Activated CD8-positive, alpha-beta T cell treated with anti-CD3 and anti-CD28 coated beads for 36 hours (primary cell): ENCODE measurements at regions of chr2 and their contacts with region 1.

Region 1: DNA sequence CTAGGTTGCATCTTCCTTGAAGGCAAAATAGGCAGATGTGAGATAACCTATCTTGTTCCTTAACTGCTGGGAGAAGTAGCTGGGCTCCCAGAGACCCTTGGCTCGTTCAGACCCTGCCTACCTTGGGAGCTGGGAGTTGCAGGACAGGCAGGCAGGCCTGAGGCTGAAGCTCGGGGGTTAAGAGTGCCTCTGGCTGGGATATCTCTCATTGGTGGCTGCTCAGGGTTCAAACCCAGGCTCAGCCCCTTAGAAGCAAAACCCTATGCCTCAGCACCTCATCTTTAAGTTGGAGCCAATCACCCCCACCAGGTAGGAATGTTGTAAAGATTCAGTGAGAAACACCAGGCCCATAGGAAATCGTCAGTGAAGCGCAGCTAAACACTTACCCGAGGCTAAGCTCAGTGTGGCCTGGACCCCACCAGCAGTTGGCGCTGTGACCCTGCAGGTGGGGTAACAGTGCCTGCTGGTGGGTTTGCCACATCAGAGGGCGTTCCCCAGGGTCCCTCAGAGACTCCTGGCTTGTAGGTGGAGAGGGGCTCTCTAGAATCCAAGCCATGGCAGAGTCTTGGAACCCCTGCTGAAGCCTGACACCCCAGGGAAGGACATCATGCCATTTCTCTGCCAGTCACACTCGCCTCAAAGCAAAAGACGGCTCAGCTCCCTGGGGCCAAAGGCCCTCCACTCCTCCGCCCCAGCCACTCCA is 54.6 kb upstream of the GPR17 start:
- DNase-seq: peak; percentile 83
- ATAC-seq: peak; percentile 99
- H3K4me3 Mint-ChIP-seq: no peak overlapping the region
- H3K27ac Mint-ChIP-seq: no peak overlapping the region
- H3K4me1 Mint-ChIP-seq: peaks cover 3% of the 10 kb centered on the region
- H3K27me3 Mint-ChIP-seq: no peaks in the 10 kb centered on the region
- CTCF ChIP-seq: peak; percentile 78

Region 2: DNA sequence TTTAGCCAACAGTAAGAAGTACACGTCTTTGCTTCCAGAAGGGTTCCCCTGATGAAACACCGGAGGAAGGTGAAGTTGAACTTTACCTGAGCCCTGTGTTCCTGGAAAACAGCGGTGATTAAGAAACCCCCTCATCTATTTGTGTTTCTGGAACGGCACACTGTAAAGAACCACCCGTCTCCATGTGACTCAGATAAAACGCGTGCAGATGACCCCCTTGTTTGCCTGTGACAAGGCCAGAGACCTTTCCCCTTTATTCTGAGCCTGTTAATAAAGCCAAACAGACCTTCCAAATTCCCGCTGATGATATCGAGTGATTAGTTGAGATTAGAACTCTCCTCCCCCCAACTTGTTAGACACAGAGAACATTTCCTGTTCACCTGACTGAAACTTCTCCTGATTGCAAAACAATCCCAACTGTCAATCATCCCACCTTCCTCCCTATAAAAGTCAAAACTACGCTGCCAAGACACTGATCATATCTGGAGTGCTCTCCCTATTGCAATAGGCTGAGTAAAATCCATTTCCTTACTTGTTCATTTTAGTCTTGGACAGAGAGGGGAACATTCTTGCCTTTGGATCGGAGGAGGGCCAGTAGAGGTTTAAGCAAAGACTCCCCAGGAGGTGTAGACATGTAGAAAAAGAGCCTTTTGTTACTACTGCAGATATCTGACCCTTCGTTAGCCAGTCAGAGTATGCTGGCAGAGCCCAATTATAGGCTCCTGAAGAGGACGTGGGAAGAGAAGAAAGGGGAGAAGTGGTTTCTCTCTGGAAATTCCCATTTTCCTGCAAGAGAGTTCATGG is 64.2 kb before region 1 on chr2:
- CTCF ChIA-PET with region 1: interaction called, 10 read pairs
- POLR2A ChIA-PET with region 1: no interaction called
- intact Hi-C with region 1: no loop called
- DNase-seq: no peak
- ATAC-seq: peak; percentile 18
- H3K4me3 Mint-ChIP-seq: peak overlapping the region; percentile 96
- H3K27ac Mint-ChIP-seq: peak overlapping the region; percentile 96
- H3K4me1 Mint-ChIP-seq: peaks cover 22% of the 10 kb centered on the region
- H3K27me3 Mint-ChIP-seq: no peaks in the 10 kb centered on the region
- CTCF ChIP-seq: no peak

Region 3: GRCh38 chr2:127609031-127609751 is 17.8 kb after region 1 on chr2:
- CTCF ChIA-PET with region 1: interaction called, 35 read pairs
- POLR2A ChIA-PET with region 1: no interaction called
- intact Hi-C with region 1: no loop called
- DNase-seq: no peak
- ATAC-seq: peak; percentile 17
- H3K4me3 Mint-ChIP-seq: no peak overlapping the region
- H3K27ac Mint-ChIP-seq: no peak overlapping the region
- H3K4me1 Mint-ChIP-seq: peaks cover 3% of the 10 kb centered on the region
- H3K27me3 Mint-ChIP-seq: no peaks in the 10 kb centered on the region
- CTCF ChIP-seq: no peak

Region 4: GRCh38 chr2:127637725-127638252 is 46.4 kb after region 1 on chr2:
- CTCF ChIA-PET with region 1: interaction called, 39 read pairs
- POLR2A ChIA-PET with region 1: interaction called, 5 read pairs
- intact Hi-C with region 1: no loop called
- DNase-seq: no peak
- ATAC-seq: no peak
- H3K4me3 Mint-ChIP-seq: peak overlapping the region; percentile 15
- H3K27ac Mint-ChIP-seq: peak overlapping the region; percentile 75
- H3K4me1 Mint-ChIP-seq: peaks cover 63% of the 10 kb centered on the region
- H3K27me3 Mint-ChIP-seq: no peaks in the 10 kb centered on the region
- CTCF ChIP-seq: no peak

Region 5: GRCh38 chr2:127649684-127650040 is 58.3 kb after region 1 on chr2:
- CTCF ChIA-PET with region 1: interaction called, 114 read pairs
- POLR2A ChIA-PET with region 1: interaction called, 4 read pairs
- intact Hi-C with region 1: loop called (anchors 1 kb)
- DNase-seq: peak; percentile 91
- ATAC-seq: peak; percentile 87
- H3K4me3 Mint-ChIP-seq: no peak overlapping the region
- H3K27ac Mint-ChIP-seq: peak overlapping the region; percentile 66
- H3K4me1 Mint-ChIP-seq: peaks cover 14% of the 10 kb centered on the region
- H3K27me3 Mint-ChIP-seq: no peaks in the 10 kb centered on the region
- CTCF ChIP-seq: peak; percentile 85

Region 6: DNA sequence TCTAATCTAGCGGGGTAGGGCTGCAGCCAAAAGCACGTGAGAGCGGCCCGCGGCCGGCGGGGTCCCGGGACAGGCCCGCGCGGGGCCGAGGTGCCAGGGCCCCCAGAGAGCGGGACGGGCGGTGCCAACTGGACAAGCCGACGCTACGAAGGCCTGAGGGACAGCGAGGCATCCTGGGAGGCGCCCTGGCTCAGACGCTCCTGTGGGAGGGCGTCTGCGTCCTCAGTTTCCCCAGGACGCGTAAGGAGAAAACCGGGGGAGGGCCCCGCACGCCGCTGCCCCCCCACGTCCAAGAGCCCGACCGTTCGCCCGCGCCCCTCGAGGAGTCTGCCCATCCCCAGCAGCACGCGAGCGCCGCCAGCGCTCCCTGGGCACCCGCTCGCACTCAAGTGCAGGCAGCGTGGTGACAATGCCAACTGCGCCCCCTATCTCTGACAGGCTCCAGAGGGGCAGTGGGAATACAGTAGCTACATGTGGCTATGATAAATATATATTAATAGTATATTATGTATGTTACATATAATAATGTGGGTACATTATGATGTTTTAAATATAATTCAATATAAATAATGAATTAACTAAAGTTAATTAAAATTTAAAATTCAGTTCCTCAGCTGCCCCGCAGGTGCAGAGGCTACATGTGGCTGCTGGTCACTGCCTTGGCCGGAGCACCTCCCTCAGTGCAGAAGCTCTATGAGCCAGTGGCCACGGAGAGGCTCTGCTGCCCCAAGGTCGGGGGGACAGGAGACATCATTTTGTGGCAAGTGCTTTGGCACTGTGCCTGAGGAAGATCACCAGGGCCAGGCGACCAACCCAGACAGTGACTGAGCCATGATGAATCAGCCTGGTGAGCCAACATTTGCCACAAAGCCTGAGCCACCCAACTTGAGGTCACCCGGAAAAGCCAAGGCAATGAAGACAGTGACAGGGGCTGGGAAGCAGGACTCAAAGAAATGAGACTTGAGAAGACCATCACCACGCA is 104.4 kb after region 1 on chr2:
- CTCF ChIA-PET with region 1: interaction called, 33 read pairs
- POLR2A ChIA-PET with region 1: no interaction called
- intact Hi-C with region 1: no loop called
- DNase-seq: peak; percentile 78
- ATAC-seq: peak; percentile 93
- H3K4me3 Mint-ChIP-seq: no peak overlapping the region
- H3K27ac Mint-ChIP-seq: no peak overlapping the region
- H3K4me1 Mint-ChIP-seq: peaks cover 7% of the 10 kb centered on the region
- H3K27me3 Mint-ChIP-seq: no peaks in the 10 kb centered on the region
- CTCF ChIP-seq: peak; percentile 75